GM12878 (cell line): ENCODE measurements at regions of chr18 and their contacts with region 1.

Region 1: DNA sequence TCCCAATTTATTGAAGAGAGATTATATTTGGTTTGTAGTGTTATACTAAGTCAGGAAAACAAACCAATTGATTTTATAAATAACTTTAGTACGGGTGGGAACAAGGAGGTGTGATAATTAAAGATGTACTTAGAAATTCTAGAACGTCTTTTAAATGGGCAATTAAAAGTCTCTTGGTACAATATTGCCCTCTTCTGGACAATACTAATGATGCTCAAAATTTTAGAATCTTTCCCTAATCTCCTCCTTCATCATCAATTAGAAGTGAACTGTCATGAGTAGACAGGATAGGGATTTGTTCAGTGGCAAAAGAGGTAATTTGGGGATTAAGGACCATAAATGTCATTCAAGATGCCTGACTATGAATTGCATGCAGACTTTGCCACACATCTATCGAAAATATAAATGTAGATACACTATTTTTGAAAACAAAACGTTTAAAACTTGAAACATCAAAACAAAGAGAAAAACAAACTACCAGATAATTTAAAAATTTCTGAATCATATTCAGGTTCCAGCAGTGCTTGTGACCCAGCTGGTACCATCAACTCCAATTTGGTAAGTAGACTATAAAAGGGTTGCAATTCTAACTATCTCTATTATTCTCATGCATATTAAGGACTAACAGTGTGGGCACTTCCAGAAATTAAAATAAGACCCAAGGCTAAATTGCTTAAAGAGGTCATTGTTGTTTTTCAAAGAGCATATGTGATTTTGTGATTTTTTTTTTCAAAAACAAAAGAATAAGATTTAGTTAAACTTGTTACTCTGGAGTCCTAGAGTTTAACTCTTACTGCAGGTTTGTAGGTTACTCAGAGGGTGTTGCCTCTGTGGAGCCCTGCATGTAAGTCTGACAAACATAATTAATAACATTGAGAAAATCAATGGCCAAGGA is 123.5 kb downstream of the LAMA3 start:
- DNase-seq: no peak
- ATAC-seq: no peak
- H3K4me3 ChIP-seq: no peak overlapping the region
- H3K27ac ChIP-seq: no peak overlapping the region
- H3K4me1 ChIP-seq: peaks cover 15% of the 10 kb centered on the region
- H3K27me3 ChIP-seq: no peaks in the 10 kb centered on the region; a peak in 1 of 4 replicates
- CTCF ChIP-seq: peak; percentile 30 to 53 (median 38); a peak in 3 of 6 replicates
- EP300 ChIP-seq: no peak
- POLR2A ChIP-seq: no peak
- RAD21 ChIP-seq: peak; percentile 67

Region 2: DNA sequence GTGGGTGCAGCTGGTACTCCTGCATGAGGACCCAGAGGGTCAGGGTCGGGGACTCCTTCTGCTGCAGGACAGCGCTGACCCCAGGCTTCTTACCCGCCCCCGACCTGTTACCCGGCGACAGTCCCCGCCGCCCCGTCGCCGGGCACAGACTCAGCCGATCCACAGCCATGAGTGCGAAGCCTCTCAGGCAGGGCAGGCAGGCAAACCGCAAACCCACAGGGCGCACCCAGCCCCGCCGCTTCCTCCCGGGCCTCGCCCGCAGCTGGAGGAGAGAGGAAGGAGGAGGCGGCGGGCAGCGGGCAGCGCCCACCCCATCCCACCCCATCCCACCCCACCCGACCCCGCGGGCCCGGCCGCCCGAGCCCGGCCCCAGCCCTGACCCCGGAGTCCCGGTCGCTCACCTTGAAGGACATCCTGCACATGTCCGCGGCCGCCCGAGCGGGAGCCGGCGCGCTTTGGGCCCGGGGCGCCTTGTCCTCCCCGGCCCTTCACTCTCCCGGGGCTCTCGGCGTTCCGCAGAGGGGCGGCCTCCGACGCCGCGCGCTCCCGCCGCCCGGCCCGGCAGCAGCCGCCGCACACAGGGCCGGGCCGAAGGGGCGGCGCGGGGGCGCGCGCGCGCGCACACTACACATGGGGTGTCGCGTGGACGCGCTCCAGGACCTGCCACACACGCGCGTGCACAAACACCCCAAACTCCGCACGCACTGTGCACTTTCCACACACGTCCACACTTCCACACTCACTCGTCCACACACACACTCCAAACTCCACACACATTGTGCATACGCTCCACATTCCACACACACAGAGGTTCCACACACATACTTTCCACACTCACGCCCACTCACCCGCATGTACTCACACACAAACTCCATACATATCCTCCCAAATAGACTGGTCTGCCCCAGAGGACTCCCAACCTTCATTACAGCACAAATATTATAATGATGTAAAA is 150.2 kb before region 1 on chr18 and contains the start of gene ANKRD29:
- CTCF ChIA-PET with region 1: no interaction called
- POLR2A ChIA-PET with region 1: no interaction called
- RAD21 ChIA-PET with region 1: no interaction called
- SMC1A ChIA-PET with region 1: no interaction called
- in situ Hi-C with region 1: no loop called
- intact Hi-C with region 1: no loop called
- DNase-seq: no peak
- ATAC-seq: peak; percentile 80
- H3K4me3 ChIP-seq: no peak within 1 kb of the TSS
- H3K27ac ChIP-seq: no peak within 1 kb of the TSS
- H3K4me1 ChIP-seq: no peaks in the 10 kb centered on the region
- H3K27me3 ChIP-seq: peaks cover 6% of the 10 kb centered on the region in 2 experiments; a peak in 3 of 4 replicates
- CTCF ChIP-seq: no peak
- EP300 ChIP-seq: no peak
- POLR2A ChIP-seq: no peak
- RAD21 ChIP-seq: no peak
- polyA plus RNA-seq, gene ANKRD29: 0.53 to 0.62 TPM

Region 3: GRCh38 chr18:23703057-23703986 is 109.5 kb before region 1 on chr18:
- CTCF ChIA-PET with region 1: interaction called, 22 read pairs
- POLR2A ChIA-PET with region 1: no interaction called
- RAD21 ChIA-PET with region 1: interaction called, 19 read pairs
- SMC1A ChIA-PET with region 1: interaction called, 12 read pairs
- in situ Hi-C with region 1: no loop called
- intact Hi-C with region 1: loop called (anchors 2 kb)
- DNase-seq: no peak
- ATAC-seq: peak; percentile 92
- H3K4me3 ChIP-seq: no peak overlapping the region
- H3K27ac ChIP-seq: no peak overlapping the region
- H3K4me1 ChIP-seq: no peaks in the 10 kb centered on the region
- H3K27me3 ChIP-seq: no peaks in the 10 kb centered on the region
- CTCF ChIP-seq: peak; percentile 35 to 79 (median 41); a peak in 5 of 6 replicates
- EP300 ChIP-seq: no peak
- POLR2A ChIP-seq: no peak
- RAD21 ChIP-seq: peak; percentile 95

Region 4: GRCh38 chr18:23828426-23828825 is 15.6 kb after region 1 on chr18:
- CTCF ChIA-PET with region 1: interaction called, 13 read pairs
- POLR2A ChIA-PET with region 1: no interaction called
- RAD21 ChIA-PET with region 1: no interaction called
- SMC1A ChIA-PET with region 1: interaction called, 3 read pairs
- in situ Hi-C with region 1: no loop called
- intact Hi-C with region 1: no loop called
- DNase-seq: no peak
- ATAC-seq: peak; percentile 96
- H3K4me3 ChIP-seq: no peak overlapping the region
- H3K27ac ChIP-seq: no peak overlapping the region
- H3K4me1 ChIP-seq: no peaks in the 10 kb centered on the region
- H3K27me3 ChIP-seq: no peaks in the 10 kb centered on the region
- CTCF ChIP-seq: no peak
- EP300 ChIP-seq: no peak
- POLR2A ChIP-seq: no peak
- RAD21 ChIP-seq: no peak